ENCODE measurements at regions of chr3 and their contacts with region 1.

Region 1: GRCh38 chr3:14791343-14791945 is 27.3 kb upstream of the FGD5 start:
- DNase-seq: peak; percentile 86
- ATAC-seq: peak; percentile 95
- H3K4me3 Mint-ChIP-seq: peak overlapping the region; percentile 57
- H3K27ac Mint-ChIP-seq: no peak overlapping the region
- H3K4me1 Mint-ChIP-seq: peaks cover 8% of the 10 kb centered on the region
- H3K27me3 Mint-ChIP-seq: no peaks in the 10 kb centered on the region
- CTCF ChIP-seq: peak; percentile 82

Region 2: GRCh38 chr3:14537590-14538447 is 253.6 kb before region 1 on chr3:
- CTCF ChIA-PET with region 1: no interaction called
- POLR2A ChIA-PET with region 1: no interaction called
- DNase-seq: no peak
- ATAC-seq: no peak
- H3K4me3 Mint-ChIP-seq: no peak overlapping the region
- H3K27ac Mint-ChIP-seq: no peak overlapping the region
- H3K4me1 Mint-ChIP-seq: peaks cover 39% of the 10 kb centered on the region
- H3K27me3 Mint-ChIP-seq: no peaks in the 10 kb centered on the region; the same call in 1 of the 2 replicates
- CTCF ChIP-seq: no peak

Region 3: GRCh38 chr3:14899993-14900618 is 108.7 kb after region 1 on chr3:
- CTCF ChIA-PET with region 1: interaction called, 10 read pairs
- POLR2A ChIA-PET with region 1: no interaction called
- DNase-seq: peak; percentile 47
- ATAC-seq: peak; percentile 72
- H3K4me3 Mint-ChIP-seq: no peak overlapping the region
- H3K27ac Mint-ChIP-seq: peak overlapping the region; percentile 55; the same call in 1 of the 2 replicates
- H3K4me1 Mint-ChIP-seq: peaks cover 31% of the 10 kb centered on the region
- H3K27me3 Mint-ChIP-seq: no peaks in the 10 kb centered on the region
- CTCF ChIP-seq: no peak